GM12878 (cell line): ENCODE measurements at regions of chr14 and their contacts with region 1.

Region 1: GRCh38 chr14:39459795-39460478 is 27.7 kb upstream of the FBXO33 start:
- DNase-seq: no peak
- ATAC-seq: no peak
- H3K4me3 ChIP-seq: no peak overlapping the region
- H3K27ac ChIP-seq: no peak overlapping the region
- H3K4me1 ChIP-seq: no peaks in the 10 kb centered on the region
- H3K27me3 ChIP-seq: no peaks in the 10 kb centered on the region
- CTCF ChIP-seq: no peak
- EP300 ChIP-seq: no peak
- POLR2A ChIP-seq: no peak
- RAD21 ChIP-seq: no peak

Region 2: DNA sequence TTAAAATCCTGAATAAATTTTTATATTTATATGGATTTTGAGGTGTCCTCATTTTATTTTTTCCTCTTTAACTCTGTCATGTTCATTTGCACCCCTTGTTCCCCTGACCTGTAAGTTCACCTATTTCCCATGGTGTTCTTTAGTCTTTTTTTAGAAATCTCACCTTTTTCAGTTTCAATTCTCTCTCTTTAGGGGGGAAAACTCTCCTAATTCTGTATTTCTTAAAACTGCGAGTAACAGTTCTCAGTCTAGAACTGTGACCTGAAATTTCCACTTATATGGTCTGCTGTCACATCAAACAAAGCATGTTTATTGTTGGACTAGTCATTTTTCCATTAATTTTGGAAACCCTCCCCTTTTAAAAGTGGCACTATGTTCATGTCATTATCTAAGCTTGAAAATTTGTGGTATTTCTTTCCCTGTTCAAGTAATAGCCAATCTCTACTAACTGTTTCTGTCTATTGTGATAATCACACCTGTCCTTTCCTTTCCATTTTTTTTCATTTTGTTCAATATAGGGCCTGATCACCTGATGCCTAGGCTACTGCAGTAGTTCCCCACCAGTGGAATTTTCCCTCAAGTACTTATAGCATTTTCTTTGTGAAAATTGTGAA is 13.7 kb before region 1 on chr14:
- CTCF ChIA-PET with region 1: interaction called, 16 read pairs
- POLR2A ChIA-PET with region 1: interaction called, 6 read pairs
- RAD21 ChIA-PET with region 1: interaction called, 20 read pairs
- SMC1A ChIA-PET with region 1: interaction called, 19 read pairs
- in situ Hi-C with region 1: no loop called
- intact Hi-C with region 1: no loop called
- DNase-seq: no peak
- ATAC-seq: peak; percentile 56
- H3K4me3 ChIP-seq: peak overlapping the region; percentile 41; the same call in 1 of the 2 replicates
- H3K27ac ChIP-seq: peak overlapping the region; percentile 79
- H3K4me1 ChIP-seq: peaks cover 48% of the 10 kb centered on the region
- H3K27me3 ChIP-seq: no peaks in the 10 kb centered on the region
- CTCF ChIP-seq: no peak
- EP300 ChIP-seq: peak in 1 of 2 experiments; percentile 45; a peak in 1 of 4 replicates
- POLR2A ChIP-seq: no peak
- RAD21 ChIP-seq: no peak

Region 3: GRCh38 chr14:39628087-39628486 is 168.2 kb after region 1 on chr14:
- CTCF ChIA-PET with region 1: no interaction called
- POLR2A ChIA-PET with region 1: no interaction called
- RAD21 ChIA-PET with region 1: no interaction called
- SMC1A ChIA-PET with region 1: no interaction called
- in situ Hi-C with region 1: no loop called
- intact Hi-C with region 1: no loop called
- DNase-seq: no peak
- ATAC-seq: no peak
- H3K4me3 ChIP-seq: no peak overlapping the region
- H3K27ac ChIP-seq: no peak overlapping the region
- H3K4me1 ChIP-seq: no peaks in the 10 kb centered on the region
- H3K27me3 ChIP-seq: no peaks in the 10 kb centered on the region
- CTCF ChIP-seq: no peak
- EP300 ChIP-seq: no peak
- POLR2A ChIP-seq: no peak
- RAD21 ChIP-seq: no peak